Activated naive CD4-positive, alpha-beta T cell treated with anti-CD3 and anti-CD28 coated beads for 36 hours (primary cell): ENCODE measurements at regions of chr5 and their contacts with region 1.

Region 1: DNA sequence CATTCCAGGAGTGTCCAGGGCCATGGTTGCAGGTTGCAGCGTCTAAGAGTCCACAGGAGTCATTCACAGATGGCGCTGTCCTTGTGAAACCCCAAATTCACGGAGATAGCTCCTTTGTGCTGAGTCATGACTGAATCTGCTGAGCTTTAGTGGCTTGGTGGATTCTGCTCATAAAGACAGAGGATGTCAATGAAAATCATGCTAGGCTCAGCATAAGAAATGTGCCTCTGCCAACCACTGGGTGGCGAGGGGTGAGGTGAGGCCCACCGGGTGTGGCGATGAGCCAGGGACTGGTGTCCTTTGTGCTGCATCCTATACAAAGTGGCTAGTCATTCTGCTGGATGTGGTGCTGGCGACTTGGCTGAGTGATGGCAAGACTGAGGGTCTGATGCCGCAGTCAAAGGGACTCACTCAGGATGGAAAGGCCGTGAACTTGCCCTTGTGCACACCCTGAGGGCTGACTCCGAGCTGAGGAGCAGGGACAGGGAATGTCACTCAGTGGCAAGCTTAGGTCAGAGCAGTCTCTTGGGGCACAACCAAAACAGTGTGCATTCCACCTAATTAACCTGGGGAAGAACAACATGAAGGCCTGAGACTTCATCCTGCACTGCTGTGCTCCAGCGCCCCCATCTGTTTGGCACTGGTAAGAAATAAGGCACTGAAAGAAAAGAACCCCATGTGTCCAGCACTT is 71.5 kb downstream of the DAP start:
- DNase-seq: peak; percentile 57
- H3K4me3 Mint-ChIP-seq: no peak overlapping the region
- H3K27ac Mint-ChIP-seq: no peak overlapping the region
- H3K4me1 Mint-ChIP-seq: no peaks in the 10 kb centered on the region
- H3K27me3 Mint-ChIP-seq: no peaks in the 10 kb centered on the region

Region 2: GRCh38 chr5:10307206-10308148 is 382.1 kb before region 1 on chr5 and contains the start of gene CMBL:
- CTCF ChIA-PET with region 1: no interaction called
- intact Hi-C with region 1: no loop called
- DNase-seq: peak; percentile 37
- H3K4me3 Mint-ChIP-seq: peak within 1 kb of the TSS; percentile 77
- H3K27ac Mint-ChIP-seq: no peak within 1 kb of the TSS
- H3K4me1 Mint-ChIP-seq: peaks cover 8% of the 10 kb centered on the region
- H3K27me3 Mint-ChIP-seq: peaks cover 20% of the 10 kb centered on the region
- total RNA-seq, gene CMBL: 2.2 to 3.2 TPM

Region 3: DNA sequence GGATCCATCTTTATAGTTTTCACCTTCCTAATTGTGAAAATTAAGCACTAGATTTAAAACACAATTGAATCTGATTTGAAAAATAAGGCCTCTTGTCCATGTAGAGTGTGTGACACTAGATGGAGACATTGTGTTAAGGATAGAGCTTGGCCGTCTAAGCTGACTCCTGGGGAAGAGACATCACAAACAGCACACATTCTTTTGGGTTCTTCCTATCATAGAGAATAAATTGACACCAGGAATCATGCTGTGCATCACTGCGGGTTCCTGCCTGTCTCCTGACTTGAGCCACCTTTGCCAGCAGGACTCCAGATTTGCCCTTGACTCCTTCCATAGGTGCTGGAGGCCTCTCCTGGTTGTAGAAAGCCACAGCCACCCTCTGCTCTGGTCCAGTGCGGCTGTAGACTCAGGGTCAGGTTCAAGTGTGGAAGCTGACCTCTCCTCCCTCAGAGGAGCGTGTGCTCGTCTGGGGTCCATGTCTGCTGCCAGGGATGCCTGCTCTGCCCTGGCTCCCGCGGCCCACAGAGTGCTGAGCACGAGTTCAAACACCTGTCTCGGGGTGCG is 236.7 kb before region 1 on chr5:
- CTCF ChIA-PET with region 1: interaction called, 13 read pairs
- intact Hi-C with region 1: loop called (anchors 1 kb)
- DNase-seq: peak; percentile 22
- H3K4me3 Mint-ChIP-seq: no peak overlapping the region
- H3K27ac Mint-ChIP-seq: no peak overlapping the region
- H3K4me1 Mint-ChIP-seq: peaks cover 1% of the 10 kb centered on the region
- H3K27me3 Mint-ChIP-seq: no peaks in the 10 kb centered on the region